Thyroid gland (tissue), 4 donors: ENCODE measurements at regions of chr4 and their contacts with region 1.

Region 1: DNA sequence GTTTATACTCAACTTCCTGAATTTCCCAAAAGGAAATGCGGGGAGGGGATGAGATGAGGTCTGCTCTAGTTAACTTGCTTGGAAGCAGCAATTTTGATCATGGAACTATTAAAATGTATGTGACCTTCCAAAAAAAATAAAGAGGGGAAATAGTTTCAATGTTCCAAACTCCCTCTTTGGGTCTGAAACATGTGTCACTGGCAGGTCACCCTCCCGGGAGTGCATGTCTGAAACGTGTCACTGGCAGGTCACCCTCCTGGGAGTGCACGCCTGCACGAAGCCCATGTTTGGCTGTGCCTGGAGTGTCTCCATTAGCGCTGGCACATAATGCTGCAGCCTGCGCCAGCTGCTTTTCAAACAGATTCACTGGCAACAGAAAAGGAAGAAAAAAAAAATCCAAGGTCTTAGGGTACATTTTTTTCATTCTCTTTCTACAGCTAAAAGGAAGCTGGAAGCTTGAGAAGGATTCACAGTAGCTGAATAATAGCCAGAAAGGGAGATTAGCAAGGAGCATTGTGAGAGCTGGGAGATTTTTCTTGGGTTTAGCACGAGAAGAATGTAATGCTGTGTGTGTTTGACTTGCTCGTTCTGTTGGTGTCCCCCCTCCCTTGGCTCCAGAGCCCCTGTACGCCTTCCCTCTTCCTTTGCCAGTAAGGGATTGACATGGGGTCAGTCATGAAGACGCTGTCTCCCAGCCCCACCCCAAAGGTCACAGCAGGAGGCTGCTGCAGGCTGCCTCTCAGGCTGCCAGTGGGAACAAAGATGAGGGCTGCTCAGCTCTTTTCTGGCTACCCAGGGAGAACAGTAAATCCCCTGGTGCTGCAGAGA is 39.2 kb upstream of the TLR3 start:
- DNase-seq: peak; percentile 93 to 95
- H3K4me3 ChIP-seq: no peak overlapping the region
- H3K27ac ChIP-seq: peak overlapping the region; percentile 86 to 97 (median 87)
- H3K4me1 ChIP-seq: peaks cover 22 to 38% of the 10 kb centered on the region in 2 donors
- H3K27me3 ChIP-seq: no peaks in the 10 kb centered on the region
- CTCF ChIP-seq: peak in 1 of 6 experiments; percentile 2
- POLR2A ChIP-seq: peak in 1 of 2 donors; percentile 34

Region 2: DNA sequence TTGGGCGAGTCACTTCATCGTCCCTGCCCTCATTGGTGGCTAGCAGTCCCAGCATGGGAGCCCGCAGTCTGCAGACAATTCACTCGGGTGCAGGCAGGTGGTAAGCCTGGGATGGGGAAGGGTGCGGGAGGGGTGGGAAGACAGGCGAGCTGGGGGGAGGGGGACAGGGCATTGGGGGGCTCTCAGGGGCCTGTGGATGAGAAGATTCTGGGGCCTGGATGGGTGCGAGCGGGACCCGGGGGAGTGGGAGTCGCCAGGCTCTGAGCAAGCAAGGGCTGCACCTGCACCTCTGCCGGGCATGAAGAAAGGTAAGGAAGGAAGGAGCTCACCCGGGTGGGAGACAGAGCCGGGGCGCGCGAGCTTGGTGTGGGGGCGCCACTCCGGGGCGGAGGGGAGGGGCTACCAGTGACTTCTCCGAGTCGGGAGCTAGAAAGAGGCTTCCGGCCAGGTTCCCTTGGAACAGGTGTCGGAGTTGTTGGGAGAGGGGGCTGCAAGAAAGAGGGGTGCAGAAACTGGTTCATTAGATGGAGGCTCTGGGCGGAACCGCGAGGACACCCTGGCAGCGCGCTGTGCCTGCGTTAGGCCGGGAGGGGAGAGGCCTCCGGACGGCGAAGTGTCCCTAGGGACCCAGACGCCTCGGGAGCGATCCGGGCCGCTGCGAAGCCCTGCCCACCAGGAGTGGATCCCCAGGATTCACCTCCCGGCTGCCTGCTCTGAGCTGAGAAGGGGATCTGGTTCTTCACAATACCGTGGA is 391.1 kb before region 1 on chr4:
- intact Hi-C with region 1: loop called (anchors 5 kb)
- DNase-seq: no peak
- H3K4me3 ChIP-seq: no peak overlapping the region
- H3K27ac ChIP-seq: no peak overlapping the region
- H3K4me1 ChIP-seq: no peaks in the 10 kb centered on the region
- H3K27me3 ChIP-seq: no peaks in the 10 kb centered on the region
- CTCF ChIP-seq: no peak
- POLR2A ChIP-seq: no peak